Activated T-helper 1 cell treated with anti-CD3 and anti-CD28 coated beads, Interleukin-12 subunit alpha, Interleukin-12 subunit beta, Interleukin-2, Interleukin-4 antibody, amounts not matched to agents 30 ng/mL and 10 ng/mL and 1 ng/mL, durations not matched to agents 14 hours and 24 hours and 36 hours (primary cell): ENCODE measurements at regions of chr1 and their contacts with region 1.

Region 1: DNA sequence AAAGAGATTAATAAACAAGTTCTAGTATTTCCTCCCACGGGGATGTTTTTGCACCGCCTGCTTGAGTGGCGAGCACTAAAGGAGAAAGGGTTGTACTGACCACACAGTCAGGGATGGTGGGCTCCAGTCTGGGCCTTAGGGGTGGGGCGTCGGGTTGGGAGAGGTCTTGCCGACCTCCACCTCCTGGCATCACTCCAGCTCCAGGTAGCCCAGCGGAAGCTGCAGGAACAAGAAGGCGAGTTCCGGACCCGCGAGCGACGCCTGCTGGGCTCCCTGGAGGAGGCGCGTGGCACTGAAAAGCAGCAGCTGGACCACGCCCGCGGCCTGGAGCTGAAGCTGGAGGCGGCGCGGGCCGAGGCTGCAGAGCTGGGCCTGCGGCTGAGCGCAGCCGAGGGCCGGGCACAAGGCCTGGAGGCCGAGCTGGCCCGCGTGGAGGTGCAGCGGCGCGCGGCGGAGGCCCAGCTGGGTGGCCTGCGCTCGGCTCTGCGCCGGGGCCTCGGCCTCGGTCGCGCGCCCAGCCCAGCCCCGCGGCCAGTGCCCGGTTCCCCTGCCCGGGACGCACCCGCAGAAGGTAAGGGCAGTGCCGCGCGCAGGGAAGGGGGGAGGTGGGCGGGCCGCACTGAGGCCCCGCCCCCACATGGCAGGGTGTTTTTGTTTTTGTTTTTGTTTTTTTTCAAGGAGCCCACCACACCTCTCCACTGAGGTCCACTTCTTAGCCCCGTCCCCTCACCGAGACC is 19.7 kb downstream of the MFAP2 start:
- DNase-seq: peak; percentile 75
- H3K4me3 Mint-ChIP-seq: peak overlapping the region; percentile 71
- H3K27ac Mint-ChIP-seq: peak overlapping the region; percentile 72
- H3K4me1 Mint-ChIP-seq: peaks cover 6% of the 10 kb centered on the region
- H3K27me3 Mint-ChIP-seq: no peaks in the 10 kb centered on the region

Region 2: DNA sequence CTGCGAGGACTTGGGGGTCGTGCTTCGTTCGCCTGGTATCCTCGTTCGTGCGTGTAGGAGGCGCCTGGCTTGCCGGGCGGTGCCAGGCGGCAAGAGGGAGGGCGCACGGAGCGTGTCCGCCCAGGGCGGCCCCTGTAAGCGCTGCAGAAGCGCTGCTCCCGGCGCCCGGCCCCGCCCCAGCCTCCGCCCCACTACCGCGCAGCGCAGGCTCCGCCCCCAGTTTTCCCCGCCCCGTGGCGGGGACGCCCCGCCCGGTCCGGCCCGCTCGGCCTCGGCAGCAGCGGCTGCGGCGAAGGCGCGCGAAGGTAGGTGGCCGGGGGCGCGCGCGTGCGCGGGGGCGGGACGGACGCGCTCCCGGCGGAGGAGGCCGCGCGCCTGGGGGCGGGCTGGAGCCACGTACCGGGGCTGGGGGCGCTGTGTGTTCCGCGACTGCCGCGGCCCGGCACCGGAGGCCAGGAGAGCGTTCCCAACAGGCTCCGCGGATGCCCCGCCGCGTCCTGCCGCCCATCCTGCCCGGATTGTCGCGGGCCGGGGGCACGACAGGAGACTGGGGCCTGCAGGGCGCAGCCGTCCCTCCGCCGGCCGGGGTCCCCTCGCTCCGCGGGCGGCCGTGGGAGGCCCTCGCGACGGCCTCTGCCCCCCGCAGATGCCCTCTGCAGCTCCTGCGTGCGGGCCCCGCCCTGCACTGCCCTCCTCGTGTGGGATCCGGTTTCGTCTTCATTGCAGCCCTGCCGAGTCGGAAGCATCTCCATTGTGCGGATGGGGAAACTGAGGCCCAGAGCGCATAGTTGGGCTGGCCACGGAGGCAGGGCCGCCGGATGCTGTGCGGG is 46.7 kb before region 1 on chr1:
- intact Hi-C with region 1: loop called (anchors 2 kb)
- DNase-seq: peak; percentile 89
- H3K4me3 Mint-ChIP-seq: peak overlapping the region; percentile 88
- H3K27ac Mint-ChIP-seq: peak overlapping the region; percentile 63
- H3K4me1 Mint-ChIP-seq: peaks cover 33% of the 10 kb centered on the region
- H3K27me3 Mint-ChIP-seq: peaks cover 2% of the 10 kb centered on the region

Region 3: GRCh38 chr1:17011439-17012307 is 50.9 kb after region 1 on chr1 and contains the start of gene ATP13A2:
- intact Hi-C with region 1: loop called (anchors 2 kb)
- DNase-seq: peak; percentile 82
- H3K4me3 Mint-ChIP-seq: peak within 1 kb of the TSS; percentile 86
- H3K27ac Mint-ChIP-seq: peak within 1 kb of the TSS; percentile 73
- H3K4me1 Mint-ChIP-seq: peaks cover 24% of the 10 kb centered on the region
- H3K27me3 Mint-ChIP-seq: peaks cover 4% of the 10 kb centered on the region
- total RNA-seq, gene ATP13A2: 48.3 and 56.4 TPM in 2 replicates

Region 4: DNA sequence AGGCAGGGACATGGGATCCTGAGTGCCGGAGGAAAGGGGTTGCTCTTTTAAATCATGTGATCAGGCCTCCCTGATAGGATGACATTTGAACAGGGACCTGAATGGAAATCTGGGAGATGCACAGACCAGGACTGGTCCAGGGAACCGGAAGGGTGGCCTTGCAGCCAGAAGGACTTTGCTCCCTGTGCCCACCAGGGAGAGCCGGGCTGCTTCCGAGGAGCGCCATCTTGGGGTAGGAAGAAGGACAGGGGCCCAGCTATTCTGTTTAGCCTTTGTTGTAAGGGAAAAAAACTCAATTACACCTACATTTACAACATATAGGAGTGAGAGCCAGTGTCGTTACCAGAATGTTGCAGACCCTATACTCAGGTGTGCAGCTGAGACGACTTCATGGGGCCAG is 1525.5 kb after region 1 on chr1:
- intact Hi-C with region 1: no loop called
- DNase-seq: no peak
- H3K4me3 Mint-ChIP-seq: no peak overlapping the region
- H3K27ac Mint-ChIP-seq: no peak overlapping the region
- H3K4me1 Mint-ChIP-seq: no peaks in the 10 kb centered on the region
- H3K27me3 Mint-ChIP-seq: peaks cover 2% of the 10 kb centered on the region